Right ventricle myocardium superior (tissue), 1 donor: ENCODE measurements at regions of chr2 and their contacts with region 1.

Region 1: GRCh38 chr2:102765061-102765460 is 3.2 kb downstream of the TMEM182 start:
- DNase-seq: no peak
- ATAC-seq: peak; percentile 26

Region 2: DNA sequence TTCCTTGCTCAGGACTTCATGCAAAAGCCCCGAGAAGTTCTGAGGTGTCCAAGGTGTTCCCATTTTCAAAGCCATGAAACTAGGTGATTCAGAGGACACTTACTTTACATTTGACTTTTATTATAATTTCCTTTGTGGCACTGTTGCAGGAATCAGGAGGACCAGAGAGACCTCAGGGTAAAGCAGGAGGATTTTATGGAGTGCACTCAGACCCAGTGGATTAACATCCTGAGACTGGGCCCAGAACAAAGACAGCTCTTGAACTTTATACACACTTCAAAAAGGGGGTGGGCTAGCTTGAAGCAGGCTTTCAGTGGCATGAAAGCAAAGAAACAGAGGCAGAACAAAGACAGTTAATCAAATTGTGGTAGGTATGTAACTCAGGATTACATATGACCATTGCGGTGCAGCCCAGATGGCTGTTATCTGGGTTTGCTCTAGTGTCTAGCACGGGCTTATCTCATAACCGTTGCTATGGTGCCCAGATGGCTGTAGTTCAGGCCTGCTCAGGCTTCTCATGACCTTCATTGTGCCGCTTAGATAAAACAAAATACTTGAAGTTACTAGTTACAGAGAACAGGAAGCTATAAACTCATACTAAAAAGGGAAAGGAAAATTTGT is 36.1 kb after region 1 on chr2:
- intact Hi-C with region 1: loop called (anchors 5 kb)
- DNase-seq: peak; percentile 74
- ATAC-seq: peak; percentile 84